ENCODE measurements at regions of chr17 and their contacts with region 1.

Region 1: GRCh38 chr17:68539548-68540467 is 27.6 kb downstream of the PRKAR1A start:
- DNase-seq: peak; percentile 47
- H3K4me3 ChIP-seq: no peak overlapping the region
- H3K27ac ChIP-seq: peak overlapping the region; percentile 1 to 12
- H3K4me1 ChIP-seq: peaks cover 3% of the 10 kb centered on the region
- H3K27me3 ChIP-seq: no peaks in the 10 kb centered on the region
- CTCF ChIP-seq: no peak
- POLR2A ChIP-seq: no peak

Region 2: DNA sequence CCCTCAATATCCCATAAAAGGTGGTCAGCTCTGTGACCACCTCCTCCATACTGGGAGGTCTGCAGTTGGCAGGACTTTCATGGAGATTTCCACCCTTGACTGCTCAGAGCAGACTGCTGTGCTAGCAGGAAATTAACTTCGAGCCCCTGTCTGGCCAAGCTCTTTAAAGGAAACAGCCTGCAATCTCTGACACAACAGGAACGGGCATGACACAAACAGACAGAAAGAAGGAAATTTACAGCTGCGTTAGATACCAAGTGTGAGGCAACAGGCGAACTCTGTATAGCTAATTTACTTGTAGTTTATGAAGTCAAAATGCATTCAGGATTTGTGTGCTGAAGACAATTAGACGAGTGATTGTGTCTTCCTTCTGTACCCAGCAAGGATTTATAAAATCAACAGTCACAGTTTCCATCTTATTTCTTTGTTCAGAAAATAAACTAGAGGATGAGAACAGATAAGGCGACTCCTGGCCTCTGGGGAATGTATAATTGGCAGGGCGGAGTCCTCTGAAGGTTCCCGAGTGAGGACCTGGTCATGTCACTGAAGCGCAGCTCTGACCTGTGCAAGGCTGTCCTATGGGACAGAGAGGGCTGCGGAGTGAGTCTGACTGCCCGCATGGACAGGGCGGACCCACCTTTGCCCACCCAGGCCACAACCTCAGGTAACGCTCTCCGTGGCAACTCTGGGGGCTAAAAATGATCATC is 98.6 kb before region 1 on chr17:
- intact Hi-C with region 1: no loop called
- DNase-seq: no peak
- H3K4me3 ChIP-seq: no peak overlapping the region
- H3K27ac ChIP-seq: peak overlapping the region; percentile 33 to 83
- H3K4me1 ChIP-seq: peaks cover 36% of the 10 kb centered on the region
- H3K27me3 ChIP-seq: no peaks in the 10 kb centered on the region
- CTCF ChIP-seq: no peak
- POLR2A ChIP-seq: no peak

Region 3: DNA sequence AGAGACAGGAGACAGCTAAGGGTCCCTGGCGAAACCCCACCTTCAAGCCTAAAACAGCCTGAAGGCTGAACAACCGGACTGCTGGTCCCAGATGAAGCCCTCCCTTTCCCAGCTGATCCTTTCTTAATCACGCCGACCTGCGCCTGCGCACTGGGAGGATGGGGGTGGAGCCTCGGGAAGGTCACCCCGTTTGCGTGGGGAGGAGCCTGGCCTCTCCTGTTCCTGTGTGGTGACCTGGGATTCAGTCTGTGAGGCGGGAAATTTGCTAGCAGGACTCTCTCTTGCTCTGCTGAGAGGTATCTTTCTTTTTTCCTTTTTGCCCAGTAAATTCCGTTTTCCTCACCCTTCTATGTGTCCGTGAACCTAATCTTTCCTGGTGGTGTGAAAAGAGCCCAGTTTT is 51.8 kb after region 1 on chr17:
- intact Hi-C with region 1: loop called (anchors 10 kb)
- DNase-seq: peak; percentile 73
- H3K4me3 ChIP-seq: peak overlapping the region; percentile 21 to 29
- H3K27ac ChIP-seq: peak overlapping the region; percentile 34 to 50
- H3K4me1 ChIP-seq: peaks cover 45% of the 10 kb centered on the region
- H3K27me3 ChIP-seq: no peaks in the 10 kb centered on the region
- CTCF ChIP-seq: no peak
- POLR2A ChIP-seq: no peak

Region 4: GRCh38 chr17:68682903-68683302 is 143.1 kb after region 1 on chr17:
- intact Hi-C with region 1: no loop called
- DNase-seq: no peak
- H3K4me3 ChIP-seq: no peak overlapping the region
- H3K27ac ChIP-seq: no peak overlapping the region
- H3K4me1 ChIP-seq: peaks cover 12% of the 10 kb centered on the region
- H3K27me3 ChIP-seq: no peaks in the 10 kb centered on the region
- CTCF ChIP-seq: no peak
- POLR2A ChIP-seq: no peak